B cell (primary cell): ENCODE measurements at regions of chr5 and their contacts with region 1.

Region 1: GRCh38 chr5:132736853-132737833 is at the start of gene KIF3A:
- DNase-seq: peak; percentile 98
- ATAC-seq: peak; percentile 90
- H3K4me3 ChIP-seq: peak within 1 kb of the TSS; percentile 57 to 80 (median 74)
- H3K4me3 Mint-ChIP-seq: peak within 1 kb of the TSS; percentile 89
- H3K27ac ChIP-seq: peak within 1 kb of the TSS; percentile 34 to 58
- H3K27ac Mint-ChIP-seq: peak within 1 kb of the TSS; percentile 96
- H3K4me1 ChIP-seq: peaks cover 11 to 13% of the 10 kb centered on the region in 2 donors
- H3K4me1 Mint-ChIP-seq: peaks cover 22% of the 10 kb centered on the region
- H3K27me3 ChIP-seq: peaks cover 0 to 3% (median 2%) of the 10 kb centered on the region in 4 experiments
- H3K27me3 Mint-ChIP-seq: peaks cover 10% of the 10 kb centered on the region
- CTCF ChIP-seq: peak; percentile 9
- total RNA-seq, gene KIF3A: 13.6 and 16.0 TPM in 2 replicates

Region 2: DNA sequence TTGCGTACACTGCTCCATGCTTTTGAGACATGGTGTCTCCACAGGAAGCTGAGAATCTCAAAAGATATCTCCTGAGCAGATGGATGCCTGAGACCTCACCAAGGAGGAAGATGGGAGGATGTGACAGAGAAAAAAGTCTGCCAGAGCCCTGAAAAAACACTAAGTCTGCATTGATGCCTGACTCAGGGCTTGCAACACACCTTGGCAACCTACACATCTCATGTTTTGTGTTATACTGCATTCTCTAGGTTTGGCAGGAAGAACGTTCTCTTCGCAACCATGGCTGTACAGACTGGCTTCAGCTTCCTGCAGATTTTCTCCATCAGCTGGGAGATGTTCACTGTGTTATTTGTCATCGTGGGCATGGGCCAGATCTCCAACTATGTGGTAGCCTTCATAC is 423.8 kb before region 1 on chr5:
- CTCF ChIA-PET with region 1: no interaction called
- POLR2A ChIA-PET with region 1: no interaction called
- intact Hi-C with region 1: no loop called
- DNase-seq: no peak
- ATAC-seq: no peak
- H3K4me3 ChIP-seq: no peak overlapping the region
- H3K4me3 Mint-ChIP-seq: no peak overlapping the region
- H3K27ac ChIP-seq: no peak overlapping the region
- H3K27ac Mint-ChIP-seq: no peak overlapping the region
- H3K4me1 ChIP-seq: no peaks in the 10 kb centered on the region
- H3K4me1 Mint-ChIP-seq: no peaks in the 10 kb centered on the region
- H3K27me3 ChIP-seq: no peaks in the 10 kb centered on the region
- H3K27me3 Mint-ChIP-seq: no peaks in the 10 kb centered on the region
- CTCF ChIP-seq: no peak

Region 3: GRCh38 chr5:132556763-132557477 is 180.2 kb before region 1 on chr5 and contains the start of gene RAD50:
- CTCF ChIA-PET with region 1: interaction called, 3 read pairs
- POLR2A ChIA-PET with region 1: no interaction called
- intact Hi-C with region 1: loop called (anchors 2 kb)
- DNase-seq: peak; percentile 91
- ATAC-seq: peak; percentile 94
- H3K4me3 ChIP-seq: peak within 1 kb of the TSS; percentile 62 to 88 (median 81)
- H3K4me3 Mint-ChIP-seq: peak within 1 kb of the TSS; percentile 96
- H3K27ac ChIP-seq: peak within 1 kb of the TSS; percentile 72 to 88
- H3K27ac Mint-ChIP-seq: peak within 1 kb of the TSS; percentile 97
- H3K4me1 ChIP-seq: peaks cover 8 to 21% of the 10 kb centered on the region in 2 donors
- H3K4me1 Mint-ChIP-seq: peaks cover 26% of the 10 kb centered on the region
- H3K27me3 ChIP-seq: no peaks in the 10 kb centered on the region
- H3K27me3 Mint-ChIP-seq: no peaks in the 10 kb centered on the region
- CTCF ChIP-seq: no peak
- total RNA-seq, gene RAD50: 31.7 and 32.7 TPM in 2 replicates

Region 4: GRCh38 chr5:132813599-132814502 is 76.7 kb after region 1 on chr5:
- CTCF ChIA-PET with region 1: interaction called, 3 read pairs
- POLR2A ChIA-PET with region 1: no interaction called
- intact Hi-C with region 1: loop called (anchors 2 kb)
- DNase-seq: peak; percentile 70
- ATAC-seq: peak; percentile 48
- H3K4me3 ChIP-seq: peak overlapping the region in 3 of 5 experiments; percentile 30 to 50 (median 38)
- H3K4me3 Mint-ChIP-seq: no peak overlapping the region
- H3K27ac ChIP-seq: no peak overlapping the region
- H3K27ac Mint-ChIP-seq: no peak overlapping the region
- H3K4me1 ChIP-seq: peaks cover 10 to 16% of the 10 kb centered on the region in 2 donors
- H3K4me1 Mint-ChIP-seq: peaks cover 11% of the 10 kb centered on the region
- H3K27me3 ChIP-seq: peaks cover 0 to 47% (median 26%) of the 10 kb centered on the region in 4 experiments
- H3K27me3 Mint-ChIP-seq: peaks cover 36% of the 10 kb centered on the region
- CTCF ChIP-seq: no peak